ENCODE measurements at regions of chr12 and their contacts with region 1.

Region 1: DNA sequence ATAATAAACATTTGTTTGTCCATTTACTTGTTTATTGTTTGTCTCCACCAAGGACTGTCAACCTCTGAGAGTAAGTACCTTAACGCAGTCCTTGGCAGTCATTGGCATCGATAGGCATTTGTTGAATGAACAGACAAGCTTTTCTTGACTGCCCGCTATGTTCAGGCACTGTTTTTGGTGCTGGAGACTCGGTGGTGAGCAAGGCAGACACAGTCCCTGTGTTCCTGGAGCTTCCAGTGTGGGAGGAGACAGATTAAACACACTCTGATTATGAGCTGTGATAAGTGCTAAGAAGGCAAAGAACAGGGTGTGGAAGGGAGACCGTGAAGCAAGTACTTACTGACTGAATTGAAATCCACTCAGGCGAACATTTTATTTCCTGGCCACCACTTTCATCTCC is 1.2 kb downstream of the ATP6V0A2 start:
- DNase-seq: peak in 7 of 42 donors; percentile 2 to 50 (median 17)

Region 2: GRCh38 chr12:123633379-123634141 is 79.8 kb before region 1 on chr12 and contains the starts of genes EIF2B1 and GTF2H3:
- intact Hi-C with region 1: loop called (anchors 2 kb)
- DNase-seq: peak; percentile 89 to 99 (median 97)

Region 3: DNA sequence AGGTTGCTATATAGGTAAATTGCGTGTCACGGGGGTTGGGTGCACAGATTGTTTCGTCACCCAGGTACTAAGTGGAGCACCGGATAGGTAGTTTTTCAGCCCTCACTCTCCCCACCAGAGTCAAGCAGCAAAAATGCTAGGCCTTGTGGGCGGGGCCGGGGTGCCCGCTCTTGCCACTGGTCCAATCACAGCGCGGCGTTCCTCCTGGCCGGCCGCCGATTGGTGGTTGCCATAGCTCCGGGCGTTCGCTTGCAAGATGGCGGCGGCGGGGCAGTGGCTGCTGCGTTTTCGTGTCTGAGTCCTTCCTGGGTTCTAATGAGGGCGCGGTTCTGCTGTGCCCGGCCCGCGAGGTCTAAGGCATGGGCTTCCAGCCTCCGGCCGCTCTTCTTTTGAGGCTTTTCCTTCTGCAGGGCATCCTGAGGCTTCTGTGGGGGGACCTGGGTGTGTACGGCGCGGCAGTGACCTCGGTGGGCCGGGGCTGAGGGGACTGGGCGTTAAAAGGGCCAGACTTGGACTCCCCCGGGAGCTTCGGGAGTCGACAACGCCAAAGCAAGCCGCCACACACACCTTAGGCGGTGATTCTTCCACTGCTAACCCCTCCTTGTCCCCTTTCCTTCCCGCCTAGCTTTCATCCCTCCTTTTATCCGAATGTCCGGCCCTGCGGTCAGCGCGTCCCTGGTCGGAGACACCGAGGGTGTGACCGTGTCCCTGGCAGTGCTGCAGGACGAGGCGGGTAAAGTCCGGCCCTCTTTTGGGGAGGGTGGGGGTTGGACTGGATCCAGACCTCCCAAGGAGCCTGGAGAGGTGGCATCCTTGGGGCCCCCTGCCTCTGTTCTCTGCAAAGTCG is 42.3 kb before region 1 on chr12 and contains the start of gene TCTN2:
- intact Hi-C with region 1: no loop called
- DNase-seq: peak; percentile 91 to 99 (median 97)

Measured in head of caudate nucleus (tissue), 42 donors.